ENCODE measurements at regions of chr9 and their contacts with region 1.

Region 1: GRCh38 chr9:113275157-113276131 is at the starts of genes CDC26 and PRPF4:
- DNase-seq: peak; percentile 95
- ATAC-seq: peak; percentile 89
- H3K4me3 ChIP-seq: peak within 1 kb of the TSS; percentile 75 to 98 (median 84)
- H3K4me3 Mint-ChIP-seq: no peak within 1 kb of the TSS
- H3K27ac ChIP-seq: peak within 1 kb of the TSS; percentile 94 to 97
- H3K27ac Mint-ChIP-seq: no peak within 1 kb of the TSS
- H3K4me1 ChIP-seq: peaks cover 9 to 16% of the 10 kb centered on the region in 2 donors
- H3K4me1 Mint-ChIP-seq: peaks cover 12% of the 10 kb centered on the region
- H3K27me3 ChIP-seq: no peaks in the 10 kb centered on the region
- H3K27me3 Mint-ChIP-seq: no peaks in the 10 kb centered on the region
- CTCF ChIP-seq: no peak
- total RNA-seq, gene CDC26: 28.9 and 32.9 TPM in 2 replicates
- total RNA-seq, gene PRPF4: 28.2 and 30.8 TPM in 2 replicates

Region 2: GRCh38 chr9:111631071-111631971 is 1644.1 kb before region 1 on chr9 and contains the start of gene DNAJC25:
- CTCF ChIA-PET with region 1: no interaction called
- POLR2A ChIA-PET with region 1: no interaction called
- intact Hi-C with region 1: loop called (anchors 10 kb)
- DNase-seq: peak; percentile 98
- ATAC-seq: peak; percentile 87
- H3K4me3 ChIP-seq: peak within 1 kb of the TSS; percentile 65 to 92 (median 85)
- H3K4me3 Mint-ChIP-seq: peak within 1 kb of the TSS; percentile 98
- H3K27ac ChIP-seq: peak within 1 kb of the TSS; percentile 64 to 84
- H3K27ac Mint-ChIP-seq: peak within 1 kb of the TSS; percentile 93
- H3K4me1 ChIP-seq: peaks cover 15 to 17% of the 10 kb centered on the region in 2 donors
- H3K4me1 Mint-ChIP-seq: peaks cover 39% of the 10 kb centered on the region
- H3K27me3 ChIP-seq: no peaks in the 10 kb centered on the region
- H3K27me3 Mint-ChIP-seq: no peaks in the 10 kb centered on the region
- CTCF ChIP-seq: no peak
- total RNA-seq, gene DNAJC25: 3.8 and 4.1 TPM in 2 replicates

Region 3: DNA sequence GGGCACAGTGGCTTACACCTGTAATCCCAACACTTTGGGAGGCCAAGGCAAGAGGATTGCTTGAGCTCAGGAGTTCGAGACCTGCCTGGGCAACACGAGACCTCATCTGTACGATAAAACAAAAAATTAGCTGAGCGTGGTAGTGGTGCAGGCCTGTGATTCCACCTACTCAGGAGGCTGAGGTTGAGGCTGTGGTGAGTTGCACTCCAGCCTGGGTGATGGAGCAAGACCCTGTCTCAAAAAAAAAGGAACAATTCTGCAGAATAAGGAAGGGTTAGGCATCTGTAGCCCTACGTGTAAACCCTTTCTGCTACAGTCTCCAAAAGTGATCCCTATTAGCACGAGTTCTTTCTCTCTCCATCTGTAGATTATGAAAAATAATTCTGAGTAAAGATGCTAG is 20.0 kb before region 1 on chr9:
- CTCF ChIA-PET with region 1: interaction called, 10 read pairs
- POLR2A ChIA-PET with region 1: no interaction called
- intact Hi-C with region 1: no loop called
- DNase-seq: no peak
- ATAC-seq: no peak
- H3K4me3 ChIP-seq: no peak overlapping the region
- H3K4me3 Mint-ChIP-seq: no peak overlapping the region
- H3K27ac ChIP-seq: no peak overlapping the region
- H3K27ac Mint-ChIP-seq: no peak overlapping the region
- H3K4me1 ChIP-seq: no peaks in the 10 kb centered on the region
- H3K4me1 Mint-ChIP-seq: no peaks in the 10 kb centered on the region
- H3K27me3 ChIP-seq: no peaks in the 10 kb centered on the region
- H3K27me3 Mint-ChIP-seq: no peaks in the 10 kb centered on the region
- CTCF ChIP-seq: no peak

Region 4: DNA sequence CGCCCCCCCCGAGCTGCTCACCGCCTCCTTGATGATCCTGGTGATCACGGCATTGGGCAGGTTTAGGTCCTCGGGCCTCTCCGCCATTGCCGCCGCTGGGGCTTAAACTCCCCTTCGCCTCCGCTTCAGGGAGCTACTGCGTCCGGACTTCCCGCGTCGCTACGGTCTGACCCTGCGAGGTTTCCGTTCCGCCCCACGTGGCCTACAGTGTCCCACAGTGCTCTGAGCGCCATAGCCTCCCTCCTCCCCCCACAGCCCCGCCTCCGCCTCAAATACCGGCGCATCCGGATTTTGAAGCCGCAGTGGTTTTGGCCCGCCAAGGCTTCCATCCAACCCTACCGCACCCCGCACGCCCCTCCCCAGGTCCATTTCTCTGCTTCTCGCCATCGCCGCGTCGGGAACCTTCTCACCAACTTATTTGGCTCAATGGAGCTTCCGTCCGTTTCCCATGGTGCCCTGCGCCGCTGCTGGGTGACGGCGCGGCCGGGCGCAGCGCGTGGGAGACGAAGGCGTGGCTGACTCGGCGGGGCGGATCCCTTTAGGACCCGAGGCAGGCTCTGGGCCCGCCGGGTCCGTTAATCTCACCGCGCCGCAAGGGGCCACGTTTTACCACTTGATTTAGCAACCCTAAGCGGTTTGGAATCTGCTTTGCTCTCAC is 134.9 kb after region 1 on chr9 and contains the starts of genes C9orf43 and POLE3:
- CTCF ChIA-PET with region 1: interaction called, 81 read pairs
- POLR2A ChIA-PET with region 1: interaction called, 6 read pairs
- intact Hi-C with region 1: loop called (anchors 1 kb)
- DNase-seq: peak; percentile 98
- ATAC-seq: peak; percentile 89
- H3K4me3 ChIP-seq: peak within 1 kb of the TSS; percentile 74 to 100 (median 97)
- H3K4me3 Mint-ChIP-seq: peak within 1 kb of the TSS; percentile 100
- H3K27ac ChIP-seq: peak within 1 kb of the TSS; percentile 92 to 97
- H3K27ac Mint-ChIP-seq: peak within 1 kb of the TSS; percentile 100
- H3K4me1 ChIP-seq: peaks cover 8 to 17% of the 10 kb centered on the region in 2 donors
- H3K4me1 Mint-ChIP-seq: peaks cover 32% of the 10 kb centered on the region
- H3K27me3 ChIP-seq: no peaks in the 10 kb centered on the region
- H3K27me3 Mint-ChIP-seq: no peaks in the 10 kb centered on the region
- CTCF ChIP-seq: peak; percentile 14
- total RNA-seq, gene C9orf43: 0.58 and 1.7 TPM in 2 replicates
- total RNA-seq, gene POLE3: 46.1 and 50.3 TPM in 2 replicates

Region 5: GRCh38 chr9:113591001-113591898 is 315.8 kb after region 1 on chr9:
- CTCF ChIA-PET with region 1: interaction called, 30 read pairs
- POLR2A ChIA-PET with region 1: no interaction called
- intact Hi-C with region 1: no loop called
- DNase-seq: peak; percentile 75
- ATAC-seq: peak; percentile 67
- H3K4me3 ChIP-seq: no peak overlapping the region
- H3K4me3 Mint-ChIP-seq: no peak overlapping the region
- H3K27ac ChIP-seq: no peak overlapping the region
- H3K27ac Mint-ChIP-seq: no peak overlapping the region
- H3K4me1 ChIP-seq: peaks cover 12 to 17% of the 10 kb centered on the region in 2 donors
- H3K4me1 Mint-ChIP-seq: peaks cover 16% of the 10 kb centered on the region
- H3K27me3 ChIP-seq: no peaks in the 10 kb centered on the region
- H3K27me3 Mint-ChIP-seq: no peaks in the 10 kb centered on the region
- CTCF ChIP-seq: peak; percentile 85

Measured in B cell (primary cell).